Sigmoid colon (tissue), 7 donors: ENCODE measurements at regions of chr2 and their contacts with region 1.

Region 1: GRCh38 chr2:10448208-10448645 is at the start of gene ODC1:
- DNase-seq: peak; percentile 97
- H3K4me3 ChIP-seq: peak within 1 kb of the TSS; percentile 61 to 71 (median 68)
- H3K27ac ChIP-seq: peak within 1 kb of the TSS; percentile 90 to 97 (median 96)
- H3K4me1 ChIP-seq: peaks cover 0 to 54% (median 35%) of the 10 kb centered on the region in 4 donors
- H3K27me3 ChIP-seq: no peaks in the 10 kb centered on the region
- CTCF ChIP-seq: no peak
- EP300 ChIP-seq: peak in 1 of 4 donors; percentile 66
- POLR2A ChIP-seq: no peak
- total RNA-seq, gene ODC1: 44.6 to 84.4 (median 53.7) TPM

Region 2: GRCh38 chr2:9975805-9976447 is 472.3 kb before region 1 on chr2:
- intact Hi-C with region 1: loop called (anchors 5 kb)
- DNase-seq: no peak
- H3K4me3 ChIP-seq: no peak overlapping the region
- H3K27ac ChIP-seq: peak overlapping the region; percentile 47 to 82 (median 76)
- H3K4me1 ChIP-seq: peaks cover 0 to 34% (median 24%) of the 10 kb centered on the region in 4 donors
- H3K27me3 ChIP-seq: no peaks in the 10 kb centered on the region
- CTCF ChIP-seq: no peak
- EP300 ChIP-seq: peak in 1 of 4 donors; percentile 29
- POLR2A ChIP-seq: no peak

Region 3: DNA sequence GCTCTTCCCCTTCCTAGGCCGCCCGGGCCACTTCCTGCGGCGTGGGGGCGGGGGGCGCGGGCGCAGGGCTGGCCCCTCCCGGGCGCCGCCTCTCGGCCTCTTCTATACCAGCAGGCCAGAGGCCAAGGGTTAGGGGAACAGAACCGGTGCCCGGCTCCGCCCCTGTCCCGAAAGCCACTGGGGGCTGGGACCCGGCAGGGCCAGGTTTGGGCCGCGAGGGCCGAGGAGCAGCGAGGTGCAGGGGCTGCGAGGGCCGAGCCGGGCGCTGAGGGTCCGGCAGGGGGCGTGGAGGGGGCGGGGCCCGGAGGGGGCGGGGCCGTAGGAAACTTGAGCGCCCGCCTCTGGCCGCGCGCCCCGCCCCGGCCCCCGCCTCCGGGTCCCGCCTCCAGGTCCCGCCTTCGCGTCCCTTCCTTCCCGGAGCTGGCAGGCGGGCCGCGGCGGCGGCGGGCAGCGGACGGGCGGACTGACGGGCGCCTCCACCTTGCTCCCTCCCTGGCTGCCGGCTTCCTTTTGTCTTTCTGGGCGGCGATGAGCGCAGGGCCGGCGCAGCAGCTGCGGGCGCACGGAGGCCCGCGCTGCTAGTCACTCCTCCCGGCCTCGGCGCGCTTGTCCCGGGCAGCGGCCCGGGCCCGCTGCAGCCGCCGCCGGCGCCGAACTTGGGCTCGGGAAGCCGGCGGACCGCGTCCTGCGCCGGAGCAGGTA is 145.6 kb before region 1 on chr2 and contains the start of gene HPCAL1:
- intact Hi-C with region 1: loop called (anchors 5 kb)
- DNase-seq: peak; percentile 93
- H3K4me3 ChIP-seq: peak within 1 kb of the TSS; percentile 56 to 91 (median 76)
- H3K27ac ChIP-seq: peak within 1 kb of the TSS; percentile 78 to 87 (median 84)
- H3K4me1 ChIP-seq: peaks cover 0 to 41% (median 27%) of the 10 kb centered on the region in 4 donors
- H3K27me3 ChIP-seq: no peaks in the 10 kb centered on the region
- CTCF ChIP-seq: peak in 3 of 4 experiments; percentile 8 to 59 (median 44)
- EP300 ChIP-seq: no peak
- POLR2A ChIP-seq: peak; percentile 34 to 58
- total RNA-seq, gene HPCAL1: 27.7 to 46.0 (median 34.2) TPM

Region 4: GRCh38 chr2:10668402-10669012 is 220.3 kb after region 1 on chr2:
- intact Hi-C with region 1: loop called (anchors 5 kb)
- DNase-seq: no peak
- H3K4me3 ChIP-seq: no peak overlapping the region
- H3K27ac ChIP-seq: no peak overlapping the region
- H3K4me1 ChIP-seq: no peaks in the 10 kb centered on the region
- H3K27me3 ChIP-seq: no peaks in the 10 kb centered on the region
- CTCF ChIP-seq: peak; percentile 32 to 62 (median 49)
- EP300 ChIP-seq: no peak
- POLR2A ChIP-seq: no peak

Region 5: DNA sequence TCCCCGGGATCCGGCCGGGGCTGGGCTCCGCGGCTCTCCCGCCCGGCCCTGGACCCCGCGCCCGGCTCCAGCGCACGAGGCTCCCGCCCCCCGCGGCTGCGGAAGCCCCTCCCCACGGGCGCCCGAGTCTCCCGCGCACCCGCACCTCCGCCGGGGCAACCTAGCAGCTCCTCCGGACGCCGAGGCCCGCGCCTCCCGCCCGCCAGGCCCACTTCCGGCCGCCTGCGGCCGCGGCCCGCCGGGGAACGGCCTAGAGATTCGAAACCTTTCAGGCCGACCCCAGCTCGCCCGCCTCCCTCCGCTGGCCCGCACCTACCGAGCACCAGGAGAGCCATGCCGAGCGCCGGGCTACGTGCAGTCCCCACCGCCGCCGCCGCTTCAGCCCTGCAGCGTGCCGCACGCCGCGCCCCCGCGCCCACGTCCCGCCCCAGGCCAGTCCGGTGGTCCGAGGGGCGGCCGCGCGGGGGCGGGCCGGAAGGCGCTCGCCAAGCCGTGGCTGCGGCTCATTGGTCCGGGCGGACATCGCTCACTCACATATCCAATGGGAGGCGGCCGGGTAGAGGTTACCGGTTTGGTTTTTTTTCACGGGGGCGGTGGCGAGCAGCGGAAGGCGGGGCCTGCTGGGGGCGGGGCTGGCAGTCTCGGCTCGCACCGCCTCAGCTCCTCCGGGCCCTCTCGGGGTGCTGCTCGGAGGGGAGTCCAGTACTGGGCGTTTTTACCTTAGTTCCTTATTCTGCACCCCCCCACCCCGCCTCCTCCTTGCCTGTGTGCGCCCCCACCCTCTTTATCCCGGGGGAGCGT is 364.3 kb after region 1 on chr2 and contains the start of gene PDIA6:
- intact Hi-C with region 1: loop called (anchors 5 kb)
- DNase-seq: peak; percentile 98
- H3K4me3 ChIP-seq: peak within 1 kb of the TSS; percentile 69 to 79 (median 74)
- H3K27ac ChIP-seq: peak within 1 kb of the TSS; percentile 87 to 98 (median 92)
- H3K4me1 ChIP-seq: peaks cover 0 to 36% (median 32%) of the 10 kb centered on the region in 4 donors
- H3K27me3 ChIP-seq: no peaks in the 10 kb centered on the region
- CTCF ChIP-seq: no peak
- EP300 ChIP-seq: no peak
- POLR2A ChIP-seq: no peak
- total RNA-seq, gene PDIA6: 57.3 to 90.3 (median 81.0) TPM